Activated T-helper 2 cell treated with anti-CD3 and anti-CD28 coated beads, Interferon-gamma antibody, Interleukin-2, Interleukin-4, amounts not matched to agents 10 μg/mL and 5 μg/mL and 100 μg/mL, durations not matched to agents 14 hours and 24 hours and 36 hours (primary cell): ENCODE measurements at regions of chr2 and their contacts with region 1.

Region 1: GRCh38 chr2:45169339-45170190 is 160.3 kb upstream of the SIX2 start:
- DNase-seq: no peak
- H3K4me3 Mint-ChIP-seq: peak overlapping the region; percentile 26
- H3K27ac Mint-ChIP-seq: no peak overlapping the region
- H3K4me1 Mint-ChIP-seq: peaks cover 4% of the 10 kb centered on the region
- H3K27me3 Mint-ChIP-seq: peaks cover 75% of the 10 kb centered on the region

Region 2: DNA sequence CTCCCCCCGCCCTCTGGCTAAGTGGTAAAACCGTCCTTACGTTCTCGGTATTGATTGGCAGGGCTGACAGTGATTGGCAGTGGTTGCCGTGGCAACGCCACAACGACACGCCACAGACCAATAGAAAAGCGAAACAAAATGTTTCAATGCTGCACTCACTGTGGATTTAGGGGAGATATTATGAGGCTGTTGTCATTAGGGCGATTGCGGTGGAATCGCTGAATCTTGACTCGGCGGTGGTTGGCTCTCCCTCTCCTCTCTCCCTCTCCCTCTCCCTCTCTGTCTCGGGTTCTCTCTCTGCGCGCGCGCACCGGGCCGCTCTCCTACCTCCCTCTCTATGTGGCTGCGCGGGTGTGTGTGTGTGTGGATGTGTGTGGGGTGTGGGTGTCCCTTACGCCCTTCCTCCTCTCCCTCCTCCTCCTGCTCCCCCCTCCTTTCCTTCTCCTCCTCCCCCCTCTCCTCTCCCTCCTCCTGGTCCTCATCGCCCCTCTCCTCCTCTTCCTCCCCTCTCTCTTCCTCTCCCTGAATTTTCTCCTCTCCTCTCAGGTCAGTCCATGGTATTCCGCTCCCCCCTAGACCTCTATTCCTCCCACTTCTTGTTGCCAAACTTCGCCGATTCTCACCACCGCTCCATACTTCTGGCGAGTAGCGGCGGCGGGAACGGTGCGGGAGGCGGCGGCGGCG is 227.9 kb before region 1 on chr2 and contains the start of gene SIX3:
- intact Hi-C with region 1: loop called (anchors 5 kb)
- DNase-seq: peak; percentile 60
- H3K4me3 Mint-ChIP-seq: peak within 1 kb of the TSS; percentile 73
- H3K27ac Mint-ChIP-seq: peak within 1 kb of the TSS; percentile 26
- H3K4me1 Mint-ChIP-seq: peaks cover 22% of the 10 kb centered on the region
- H3K27me3 Mint-ChIP-seq: peaks cover 80% of the 10 kb centered on the region
- total RNA-seq, gene SIX3: 0.25 and 0.34 TPM in 2 replicates